GM10248 (cell line): ENCODE measurements at regions of chr5 and their contacts with region 1.

Region 1: GRCh38 chr5:109725135-109725534 is 35.4 kb downstream of the MAN2A1 start:
- DNase-seq: no peak
- CTCF ChIP-seq: no peak

Region 2: DNA sequence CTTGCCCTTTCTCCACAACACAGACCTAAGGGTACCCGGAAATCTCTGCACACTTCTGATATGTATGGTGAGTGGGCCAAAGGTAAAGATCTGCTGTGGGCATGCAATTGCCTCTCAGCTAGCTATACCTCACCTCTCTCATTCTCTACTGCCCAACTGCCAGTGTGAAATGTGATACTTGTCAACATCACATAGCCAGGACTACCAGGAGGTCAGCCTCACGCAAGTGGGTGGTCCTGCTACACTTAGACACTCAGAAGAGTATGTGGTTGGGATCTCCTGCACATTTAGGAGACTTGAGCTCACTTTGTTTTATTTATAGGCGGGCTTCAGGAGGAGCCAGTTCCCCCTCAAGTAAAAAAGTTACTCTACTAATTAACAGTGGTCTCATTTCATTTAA is 123.4 kb before region 1 on chr5:
- CTCF ChIA-PET with region 1: no interaction called
- POLR2A ChIA-PET with region 1: no interaction called
- DNase-seq: no peak
- CTCF ChIP-seq: no peak

Region 3: DNA sequence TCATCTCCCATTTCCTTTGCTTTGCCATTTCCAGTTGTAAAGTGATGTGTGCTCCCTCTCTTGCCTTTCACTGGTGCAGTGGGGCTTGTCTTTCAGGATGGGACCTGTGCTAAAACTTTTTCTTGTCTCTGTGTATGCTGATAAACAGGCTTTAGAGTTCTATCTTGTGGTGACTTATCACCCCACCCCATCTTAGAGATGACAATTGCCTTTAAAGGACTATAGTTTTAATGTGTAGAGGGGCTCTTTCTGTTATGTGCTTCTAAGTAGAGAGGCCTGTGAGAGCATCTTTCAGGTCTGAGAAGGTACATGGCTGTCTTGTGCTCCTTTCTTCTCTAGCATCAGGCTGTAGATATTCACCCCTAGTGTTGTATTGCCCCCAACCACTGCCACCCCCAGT is 13.5 kb before region 1 on chr5:
- CTCF ChIA-PET with region 1: interaction called, 10 read pairs
- POLR2A ChIA-PET with region 1: no interaction called
- DNase-seq: no peak
- CTCF ChIP-seq: no peak

Region 4: DNA sequence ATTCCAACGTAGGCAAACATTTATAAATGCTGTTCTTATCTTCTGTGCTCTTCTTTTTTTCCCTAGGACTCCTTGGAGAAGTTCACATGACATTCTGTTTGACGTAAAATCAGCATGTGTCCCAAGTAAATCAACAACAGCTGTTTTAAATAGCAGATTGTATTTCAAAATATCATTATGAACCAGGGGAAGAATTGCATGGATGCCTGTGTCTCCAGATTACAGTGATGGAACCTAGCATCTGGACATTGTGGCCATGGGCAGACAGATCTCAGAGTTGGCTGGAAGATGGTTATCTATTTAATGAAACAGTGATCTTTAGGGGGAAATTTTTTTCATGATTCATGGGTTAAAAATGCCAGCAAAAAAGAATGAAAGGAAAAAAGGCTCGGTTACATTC is 186.6 kb after region 1 on chr5:
- CTCF ChIA-PET with region 1: no interaction called
- POLR2A ChIA-PET with region 1: no interaction called
- DNase-seq: no peak
- CTCF ChIP-seq: no peak

Region 5: GRCh38 chr5:110018509-110018908 is 293.4 kb after region 1 on chr5:
- CTCF ChIA-PET with region 1: no interaction called
- POLR2A ChIA-PET with region 1: no interaction called
- DNase-seq: no peak
- CTCF ChIP-seq: no peak